Vagina (tissue), 2 donors: ENCODE measurements at regions of chr17 and their contacts with region 1.

Region 1: DNA sequence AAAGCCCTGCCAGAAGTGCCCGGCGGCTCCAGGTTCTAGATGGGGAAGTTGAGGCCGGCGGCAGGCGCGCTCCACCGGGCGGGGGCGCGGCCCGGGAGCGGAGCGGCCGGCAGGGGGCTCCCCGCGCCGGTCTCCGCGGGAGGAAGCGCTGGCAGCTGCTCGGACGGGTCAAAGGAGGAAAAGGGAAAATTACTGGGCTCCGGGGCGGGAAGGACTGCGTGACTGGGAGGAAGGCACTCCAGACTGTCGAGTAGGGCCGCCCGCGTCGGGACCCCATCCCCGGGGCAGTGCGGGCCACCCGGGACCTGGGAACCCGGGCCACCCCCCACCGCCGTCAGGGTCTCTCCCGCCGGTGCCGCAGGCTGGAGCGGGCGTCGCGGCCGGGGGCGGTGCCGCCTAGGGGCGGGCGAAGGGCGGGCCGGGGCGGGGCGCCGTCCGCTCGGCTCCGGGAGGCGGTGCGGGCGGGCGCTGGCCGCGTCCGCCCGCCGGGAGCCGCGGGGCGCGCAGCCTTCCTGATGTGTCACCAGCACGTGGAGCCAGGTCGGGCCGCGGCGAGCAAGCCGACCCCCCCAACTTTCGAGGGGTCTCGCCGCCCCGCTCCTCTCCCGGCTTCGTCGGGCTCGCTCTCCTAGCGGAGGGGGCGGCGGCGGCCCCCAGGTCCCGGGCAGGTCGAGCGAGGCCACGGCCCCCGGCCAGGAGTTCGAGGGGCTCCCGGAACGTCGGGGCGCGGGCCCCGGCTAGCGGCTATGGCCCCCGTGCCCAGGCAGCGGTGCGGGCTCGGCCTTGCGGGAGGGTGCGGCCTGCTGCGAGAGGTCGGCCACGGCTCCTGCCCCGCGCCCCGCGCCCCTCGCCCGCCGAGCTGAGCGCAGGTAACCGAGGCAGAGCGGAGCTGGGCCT is 167.5 kb downstream of the RAB11FIP4 start:
- DNase-seq: no peak
- H3K4me3 ChIP-seq: peak overlapping the region; percentile 65 to 72
- H3K27ac ChIP-seq: peak overlapping the region; percentile 78
- H3K4me1 ChIP-seq: peaks cover 34% of the 10 kb centered on the region
- H3K27me3 ChIP-seq: no peaks in the 10 kb centered on the region
- CTCF ChIP-seq: peak; percentile 53 to 99 (median 67)
- POLR2A ChIP-seq: peak in 1 of 2 donors; percentile 67

Region 2: GRCh38 chr17:31448467-31449077 is 110.4 kb before region 1 on chr17:
- intact Hi-C with region 1: no loop called
- DNase-seq: no peak
- H3K4me3 ChIP-seq: no peak overlapping the region
- H3K27ac ChIP-seq: no peak overlapping the region
- H3K4me1 ChIP-seq: no peaks in the 10 kb centered on the region
- H3K27me3 ChIP-seq: no peaks in the 10 kb centered on the region
- CTCF ChIP-seq: no peak
- POLR2A ChIP-seq: no peak

Region 3: DNA sequence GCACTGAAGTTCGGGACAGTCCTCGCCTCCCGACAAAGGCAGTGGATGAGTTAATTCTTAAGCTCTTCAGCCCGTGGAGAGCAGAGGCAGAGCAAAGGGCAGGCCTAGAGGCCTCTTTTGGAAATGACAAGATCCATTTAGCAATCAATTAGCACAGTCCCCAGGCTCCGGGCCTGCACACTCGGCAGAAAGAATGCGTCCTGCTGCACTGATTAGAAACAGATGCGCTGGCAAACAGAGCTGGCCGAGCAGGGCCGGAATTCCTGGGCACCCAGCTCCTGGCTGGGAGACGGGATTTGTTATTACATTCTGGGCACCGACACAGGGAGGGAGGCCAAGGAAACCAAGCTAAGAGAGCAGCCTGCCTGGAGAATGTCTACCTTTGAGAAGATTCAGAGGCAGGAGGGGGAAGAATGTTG is 137.2 kb after region 1 on chr17:
- intact Hi-C with region 1: loop called (anchors 10 kb)
- DNase-seq: no peak
- H3K4me3 ChIP-seq: no peak overlapping the region
- H3K27ac ChIP-seq: peak overlapping the region; percentile 42
- H3K4me1 ChIP-seq: peaks cover 44% of the 10 kb centered on the region
- H3K27me3 ChIP-seq: no peaks in the 10 kb centered on the region
- CTCF ChIP-seq: peak in 1 of 3 experiments; percentile 37
- POLR2A ChIP-seq: no peak

Region 4: GRCh38 chr17:31842183-31843069 is 283.4 kb after region 1 on chr17:
- intact Hi-C with region 1: loop called (anchors 5 kb)
- DNase-seq: no peak
- H3K4me3 ChIP-seq: peak overlapping the region in 1 of 2 donors; percentile 14
- H3K27ac ChIP-seq: peak overlapping the region; percentile 27
- H3K4me1 ChIP-seq: peaks cover 18% of the 10 kb centered on the region
- H3K27me3 ChIP-seq: no peaks in the 10 kb centered on the region
- CTCF ChIP-seq: peak; percentile 91 to 97 (median 91)
- POLR2A ChIP-seq: no peak